ENCODE measurements at regions of chr3 and their contacts with region 1.

Region 1: DNA sequence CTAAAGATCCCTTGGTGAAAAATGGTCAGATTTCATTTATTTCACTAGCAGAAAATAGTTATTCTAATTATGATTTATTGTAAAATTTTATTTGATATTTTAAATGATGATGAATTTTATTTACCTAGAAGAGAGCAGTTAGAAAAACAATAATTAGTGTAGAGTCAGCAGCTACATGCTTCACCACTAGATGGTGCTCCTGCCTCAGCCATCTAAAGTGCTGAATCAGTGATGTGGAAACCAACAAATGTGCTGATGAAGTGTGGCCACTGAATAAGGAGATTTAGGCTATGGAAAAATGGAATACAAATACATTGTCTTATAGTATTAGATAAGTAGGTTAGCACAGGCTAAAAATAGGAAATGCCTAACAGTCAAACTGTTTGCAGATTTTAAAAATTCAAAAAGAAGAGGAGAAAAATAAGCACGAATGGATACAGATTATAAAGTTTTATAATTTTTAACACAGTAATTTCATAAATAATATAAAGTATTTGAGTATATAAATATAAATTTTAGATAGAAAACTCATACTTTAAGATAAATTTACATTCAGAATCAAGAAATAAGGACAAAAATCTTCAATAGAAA is 109.8 kb downstream of the PPP2R3A start:
- DNase-seq: peak; percentile 69 to 77
- H3K4me3 ChIP-seq: no peak overlapping the region
- H3K27ac ChIP-seq: no peak overlapping the region
- H3K4me1 ChIP-seq: peaks cover 0 to 9% of the 10 kb centered on the region in 2 donors
- H3K27me3 ChIP-seq: no peaks in the 10 kb centered on the region
- CTCF ChIP-seq: peak; percentile 63 to 99 (median 91)
- POLR2A ChIP-seq: no peak

Region 2: DNA sequence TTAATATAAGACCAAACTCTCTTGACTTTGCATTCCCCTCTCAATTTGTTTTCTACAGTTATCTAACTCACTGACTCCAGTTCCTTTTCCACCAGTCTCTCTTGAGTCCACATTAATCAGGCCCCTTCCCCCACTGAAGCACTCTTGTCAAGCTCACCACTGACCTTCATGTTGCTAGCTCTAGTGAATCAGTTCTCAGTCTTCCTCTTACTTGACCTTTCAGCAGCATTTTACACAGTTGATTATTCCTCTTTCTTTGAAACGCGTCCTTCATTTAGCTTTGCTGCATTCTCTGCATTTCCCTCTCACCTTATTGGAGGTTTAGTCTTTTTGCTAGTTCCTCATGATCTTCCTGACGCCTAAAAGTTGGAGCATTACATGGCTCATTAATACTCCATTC is 101.5 kb before region 1 on chr3:
- intact Hi-C with region 1: no loop called
- DNase-seq: no peak
- H3K4me3 ChIP-seq: no peak overlapping the region
- H3K27ac ChIP-seq: no peak overlapping the region
- H3K4me1 ChIP-seq: no peaks in the 10 kb centered on the region
- H3K27me3 ChIP-seq: no peaks in the 10 kb centered on the region
- CTCF ChIP-seq: no peak
- POLR2A ChIP-seq: no peak

Region 3: GRCh38 chr3:136196401-136197158 is 121.3 kb after region 1 on chr3:
- intact Hi-C with region 1: loop called (anchors 10 kb)
- DNase-seq: peak; percentile 99
- H3K4me3 ChIP-seq: peak overlapping the region in 2 of 3 donors; percentile 72 to 78
- H3K27ac ChIP-seq: peak overlapping the region; percentile 99 to 100 (median 100)
- H3K4me1 ChIP-seq: peaks cover 23% of the 10 kb centered on the region in 2 donors
- H3K27me3 ChIP-seq: no peaks in the 10 kb centered on the region
- CTCF ChIP-seq: no peak
- POLR2A ChIP-seq: peak; percentile 11 to 89

Region 4: DNA sequence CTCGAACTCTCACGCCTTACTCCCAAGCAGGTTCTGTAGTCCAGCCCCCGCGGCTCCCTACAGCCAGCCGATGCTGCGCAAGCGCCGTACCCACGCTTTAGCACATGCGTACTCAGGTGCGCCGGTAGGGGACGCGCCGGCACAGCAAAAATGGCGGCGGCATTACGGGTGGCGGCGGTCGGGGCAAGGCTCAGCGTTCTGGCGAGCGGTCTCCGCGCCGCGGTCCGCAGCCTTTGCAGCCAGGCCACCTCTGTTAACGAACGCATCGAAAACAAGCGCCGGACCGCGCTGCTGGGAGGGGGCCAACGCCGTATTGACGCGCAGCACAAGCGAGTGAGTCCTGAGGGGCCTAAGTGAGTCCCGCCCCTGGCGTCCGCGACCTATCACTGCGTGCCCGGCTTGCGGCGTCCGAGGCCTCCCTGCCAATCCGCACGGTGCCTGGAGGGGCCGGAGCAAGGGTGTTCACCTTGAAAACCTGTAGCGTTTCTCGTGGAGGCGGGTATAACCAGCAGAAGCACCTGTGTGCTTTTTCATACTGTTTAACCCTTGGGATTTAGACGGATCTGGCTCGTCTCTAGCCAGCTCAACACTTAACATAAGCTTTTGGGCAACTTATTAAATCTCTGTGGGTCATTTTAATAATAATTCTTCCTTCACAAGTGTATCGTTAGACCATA is 175.1 kb after region 1 on chr3 and contains the start of gene PCCB:
- intact Hi-C with region 1: loop called (anchors 5 kb)
- DNase-seq: peak; percentile 97 to 98
- H3K4me3 ChIP-seq: peak within 1 kb of the TSS; percentile 11 to 79 (median 14)
- H3K27ac ChIP-seq: peak within 1 kb of the TSS; percentile 63 to 91 (median 87)
- H3K4me1 ChIP-seq: peaks cover 13 to 16% of the 10 kb centered on the region in 2 donors
- H3K27me3 ChIP-seq: no peaks in the 10 kb centered on the region
- CTCF ChIP-seq: peak; percentile 62 to 90 (median 84)
- POLR2A ChIP-seq: peak; percentile 25 to 87
- total RNA-seq, gene PCCB: 31.2 to 95.8 (median 60.3) TPM

Region 5: DNA sequence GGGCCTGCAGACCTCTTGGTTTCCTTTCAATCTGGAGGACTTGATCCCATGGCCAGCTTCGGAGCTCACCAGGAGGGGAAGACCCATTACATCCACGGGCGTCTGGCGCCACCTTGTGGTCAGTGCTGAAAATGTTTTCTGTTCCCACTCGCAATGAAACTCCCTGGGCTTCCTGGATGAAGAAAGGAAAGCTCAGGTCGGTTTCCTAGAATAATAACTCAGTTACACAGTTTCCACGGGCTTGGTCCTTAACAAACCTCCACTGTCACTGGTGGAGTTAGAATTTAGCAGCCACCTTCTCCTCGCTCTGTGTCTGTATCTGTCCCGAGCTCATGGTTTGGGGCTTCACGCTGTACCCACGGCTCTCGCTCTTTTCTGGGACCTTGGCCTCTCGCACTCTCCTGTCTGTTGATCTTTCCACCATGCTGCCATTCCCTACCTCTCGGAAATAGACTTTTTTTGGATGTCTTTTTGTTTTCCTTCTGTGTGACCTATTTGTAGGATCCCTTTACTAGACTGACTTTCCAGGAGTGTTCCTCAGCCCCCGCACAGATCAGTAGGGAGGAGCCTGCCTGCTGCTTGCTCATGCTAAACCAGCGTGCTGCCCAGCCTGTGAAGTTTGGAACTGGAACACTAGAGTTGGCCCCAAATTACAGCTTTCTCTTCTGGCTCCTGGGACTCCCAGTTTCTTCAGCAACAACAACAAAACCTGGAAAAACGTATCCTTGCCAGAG is 938.8 kb after region 1 on chr3:
- intact Hi-C with region 1: loop called (anchors 5 kb)
- DNase-seq: peak; percentile 88 to 93
- H3K4me3 ChIP-seq: peak overlapping the region in 2 of 3 donors; percentile 0 to 26
- H3K27ac ChIP-seq: peak overlapping the region; percentile 34 to 69 (median 50)
- H3K4me1 ChIP-seq: no peaks in the 10 kb centered on the region
- H3K27me3 ChIP-seq: no peaks in the 10 kb centered on the region
- CTCF ChIP-seq: peak; percentile 52 to 95 (median 86)
- POLR2A ChIP-seq: no peak

Measured in thyroid gland (tissue), 4 donors.